PC-9 (cell line): ENCODE measurements at regions of chr22 and their contacts with region 1.

Region 1: GRCh38 chr22:50620593-50621355 is 7.2 kb downstream of the ARSA start:
- DNase-seq: no peak
- H3K4me3 ChIP-seq: peak overlapping the region; percentile 38; the same call in 1 of the 2 replicates
- H3K27ac ChIP-seq: no peak overlapping the region
- H3K4me1 ChIP-seq: peaks cover 31% of the 10 kb centered on the region
- H3K27me3 ChIP-seq: no peaks in the 10 kb centered on the region
- CTCF ChIP-seq: peak; percentile 96

Region 2: DNA sequence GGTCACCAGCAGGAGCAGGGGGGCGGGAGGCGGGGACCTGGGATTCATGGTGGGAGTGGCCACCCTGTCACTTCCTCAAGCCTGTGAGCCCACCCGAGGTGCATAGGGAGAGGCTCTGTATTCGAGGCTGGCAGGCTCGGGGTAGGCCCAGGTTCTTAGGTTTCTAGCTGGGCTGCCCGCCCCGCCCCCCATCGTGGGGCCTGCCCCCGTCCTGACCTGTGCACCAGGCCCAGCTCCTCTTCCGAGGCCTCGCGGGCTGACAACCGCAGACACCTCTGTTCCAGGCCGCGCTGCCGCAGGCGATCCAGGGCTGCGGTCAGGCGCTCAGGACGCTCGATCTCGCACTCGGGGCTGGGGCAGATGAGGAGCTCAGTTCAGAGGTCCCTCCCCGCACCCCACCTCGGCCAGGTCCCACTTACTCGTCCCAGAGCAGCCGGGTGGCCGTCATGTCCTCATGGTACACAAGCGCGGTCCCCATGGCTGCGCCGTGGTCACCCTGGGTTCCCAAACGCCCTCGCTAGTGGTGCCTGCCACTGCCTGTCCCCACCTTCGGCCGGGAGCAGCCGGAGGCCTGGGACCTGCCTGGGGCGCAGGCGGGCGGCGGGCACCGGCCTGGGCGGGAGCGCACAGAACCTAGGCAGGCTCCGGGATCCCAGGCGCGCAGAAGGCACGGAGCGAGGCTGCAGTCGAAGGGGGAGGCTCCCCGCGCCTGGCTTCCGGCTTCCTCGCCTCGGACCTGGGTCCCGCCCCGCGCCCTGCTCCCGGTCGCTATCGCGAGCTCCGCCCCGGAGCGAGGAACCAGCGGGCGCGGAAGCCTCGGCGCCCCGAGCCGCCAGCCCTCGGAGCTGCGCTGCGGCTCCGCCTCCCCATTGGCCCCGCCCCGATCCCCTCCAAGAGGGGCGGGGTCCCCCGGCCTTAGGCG is 370.0 kb before region 1 on chr22 and contains the start of gene HDAC10:
- CTCF ChIA-PET with region 1: interaction called, 3 read pairs
- POLR2A ChIA-PET with region 1: no interaction called
- intact Hi-C with region 1: loop called (anchors 5 kb)
- DNase-seq: peak; percentile 72 to 83
- H3K4me3 ChIP-seq: peak within 1 kb of the TSS; percentile 84
- H3K27ac ChIP-seq: peak within 1 kb of the TSS; percentile 37
- H3K4me1 ChIP-seq: peaks cover 22% of the 10 kb centered on the region
- H3K27me3 ChIP-seq: no peaks in the 10 kb centered on the region
- CTCF ChIP-seq: 0 out of 2 replicates have a peak, but pooled peaks have one; percentile 19
- total RNA-seq, gene HDAC10: 80.5 and 101 TPM in 2 replicates

Region 3: DNA sequence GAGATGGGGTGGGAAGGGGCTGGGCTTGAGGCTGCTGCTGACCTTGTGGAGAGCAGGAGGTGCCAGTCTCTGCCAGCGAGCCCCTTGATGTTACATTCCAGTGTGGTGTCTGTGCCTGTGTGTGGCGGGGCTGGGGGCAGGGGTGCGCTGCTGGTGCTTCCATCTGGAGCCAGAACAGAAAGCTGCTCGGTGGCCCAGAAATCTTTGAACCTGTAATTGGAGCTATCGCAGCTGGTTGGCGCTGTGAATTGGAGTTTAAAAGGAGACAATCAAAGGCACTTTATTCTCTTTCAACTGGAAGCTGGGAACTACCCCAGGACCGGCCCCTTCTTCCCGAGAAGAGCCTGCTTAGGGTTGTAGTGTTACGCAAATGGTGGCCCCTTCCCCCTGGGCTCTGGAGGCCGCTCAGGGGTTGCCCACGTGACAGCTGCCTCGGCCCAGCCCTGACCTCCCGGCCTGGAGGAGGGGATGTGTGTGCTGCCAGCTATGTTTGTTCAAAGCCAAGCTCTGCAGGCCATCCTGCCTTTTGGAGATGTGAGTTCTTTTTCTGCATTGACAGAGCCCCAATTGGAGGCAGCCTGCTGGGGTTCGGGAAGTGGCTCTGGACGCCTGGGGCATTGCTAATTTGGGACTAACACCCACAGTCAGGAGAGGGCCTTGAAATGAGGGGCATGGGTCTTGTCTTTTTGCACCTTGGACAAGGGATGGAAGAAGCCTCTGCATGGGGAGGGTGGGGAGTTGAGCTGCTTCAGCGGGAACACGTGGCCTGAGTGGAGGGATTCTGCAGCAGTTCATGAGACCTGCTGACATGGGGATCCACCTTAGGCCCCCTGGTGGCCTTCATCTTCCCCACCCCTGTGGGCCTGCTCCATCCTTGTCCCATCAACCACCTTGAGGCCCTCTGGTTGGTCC is 21.2 kb after region 1 on chr22:
- CTCF ChIA-PET with region 1: interaction called, 12 read pairs
- POLR2A ChIA-PET with region 1: no interaction called
- intact Hi-C with region 1: no loop called
- DNase-seq: no peak
- H3K4me3 ChIP-seq: no peak overlapping the region
- H3K27ac ChIP-seq: no peak overlapping the region
- H3K4me1 ChIP-seq: no peaks in the 10 kb centered on the region
- H3K27me3 ChIP-seq: peaks cover 33% of the 10 kb centered on the region
- CTCF ChIP-seq: no peak; the same call in 1 of the 2 replicates

Region 4: DNA sequence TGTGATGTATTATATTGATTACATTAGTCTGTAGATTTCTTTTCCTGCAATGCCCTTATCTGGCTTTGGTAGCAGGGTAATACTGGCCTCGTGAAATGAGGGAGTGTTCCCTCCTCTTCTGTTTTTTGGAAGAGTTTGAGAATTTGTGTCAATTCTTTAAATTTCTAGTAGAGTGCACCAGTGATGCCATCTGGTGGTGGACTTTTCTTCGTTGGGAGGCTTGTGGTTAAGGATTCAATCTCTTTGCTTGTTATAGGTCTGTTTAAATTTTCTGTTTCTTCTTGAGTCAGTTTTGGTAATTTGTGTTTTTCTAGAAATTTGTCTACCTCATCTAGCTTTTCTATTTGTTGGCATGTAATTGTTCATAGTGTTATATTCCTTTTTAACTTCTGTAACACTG is 70.7 kb after region 1 on chr22:
- CTCF ChIA-PET with region 1: no interaction called
- POLR2A ChIA-PET with region 1: no interaction called
- intact Hi-C with region 1: loop called (anchors 2 kb)
- DNase-seq: peak in 1 of 2 experiments; percentile 33
- H3K4me3 ChIP-seq: no peak overlapping the region
- H3K27ac ChIP-seq: no peak overlapping the region
- H3K4me1 ChIP-seq: no peaks in the 10 kb centered on the region
- H3K27me3 ChIP-seq: no peaks in the 10 kb centered on the region
- CTCF ChIP-seq: peak; percentile 89